Right ventricle myocardium superior (tissue), 1 donor: ENCODE measurements at regions of chr11 and their contacts with region 1.

Region 1: DNA sequence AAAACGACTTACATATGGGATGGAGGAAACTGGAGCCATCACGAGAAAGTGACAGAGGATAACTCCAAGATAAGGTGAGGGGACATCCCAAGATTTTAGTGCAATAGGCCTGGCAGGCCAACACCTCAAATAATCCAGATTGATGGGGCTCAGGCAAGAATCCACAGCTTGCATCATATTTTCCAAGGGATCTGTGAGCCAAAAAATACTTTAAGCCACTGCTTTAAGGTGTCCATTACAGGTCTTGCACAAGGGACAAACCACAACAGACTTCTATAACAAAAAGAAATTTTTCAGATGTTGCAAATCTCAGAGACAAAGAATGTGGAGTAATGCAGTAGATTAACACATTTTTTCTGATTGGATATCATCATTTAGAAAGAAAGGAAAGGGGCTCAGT is 45.6 kb downstream of the DENND5A start:
- DNase-seq: no peak
- ATAC-seq: peak; percentile 60

Region 2: DNA sequence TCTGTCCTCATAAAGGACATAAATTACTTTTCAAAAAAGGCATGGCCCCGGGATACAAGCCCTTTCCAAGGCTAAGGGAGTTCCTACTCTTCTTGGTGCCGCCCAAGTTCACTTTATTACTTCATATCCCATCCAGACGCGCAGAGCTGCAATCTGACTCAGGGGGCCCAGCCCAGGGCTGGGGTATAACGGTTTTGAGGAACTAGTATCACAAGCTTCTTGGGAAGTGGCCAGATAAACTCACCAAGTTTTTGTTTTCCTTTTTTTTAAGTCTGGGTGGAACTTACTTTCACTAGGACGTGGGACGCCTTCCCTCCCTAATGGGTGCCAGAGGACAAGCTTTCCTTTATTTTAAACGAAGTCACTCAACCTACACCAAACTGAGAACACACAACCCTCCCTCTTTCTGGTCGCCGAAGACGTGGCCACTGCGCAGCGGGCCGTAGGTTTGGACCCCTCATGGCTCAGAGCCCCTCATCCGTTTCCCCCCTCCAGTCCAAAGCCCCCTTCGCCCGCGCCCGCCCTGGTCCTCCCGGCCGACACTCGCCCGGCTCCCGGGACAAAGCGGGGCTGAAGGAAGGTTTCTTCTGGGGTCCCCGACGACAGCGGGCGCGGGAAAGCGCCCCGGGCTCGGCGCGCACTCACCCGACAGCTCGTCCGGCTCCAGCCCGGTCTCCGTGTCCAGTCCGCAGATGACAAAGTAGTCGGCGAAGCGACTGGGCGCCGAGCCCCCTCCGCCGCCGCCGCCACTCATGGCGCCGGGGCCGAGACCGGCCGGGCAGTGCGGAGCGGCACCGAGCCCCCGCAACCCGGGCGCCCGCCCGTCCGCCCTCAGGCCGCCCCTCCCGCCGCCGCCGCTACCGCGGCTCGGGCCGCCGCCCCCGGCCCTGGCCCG is 45.0 kb after region 1 on chr11:
- intact Hi-C with region 1: loop called (anchors 5 kb)
- DNase-seq: peak; percentile 80
- ATAC-seq: peak; percentile 75

Region 3: DNA sequence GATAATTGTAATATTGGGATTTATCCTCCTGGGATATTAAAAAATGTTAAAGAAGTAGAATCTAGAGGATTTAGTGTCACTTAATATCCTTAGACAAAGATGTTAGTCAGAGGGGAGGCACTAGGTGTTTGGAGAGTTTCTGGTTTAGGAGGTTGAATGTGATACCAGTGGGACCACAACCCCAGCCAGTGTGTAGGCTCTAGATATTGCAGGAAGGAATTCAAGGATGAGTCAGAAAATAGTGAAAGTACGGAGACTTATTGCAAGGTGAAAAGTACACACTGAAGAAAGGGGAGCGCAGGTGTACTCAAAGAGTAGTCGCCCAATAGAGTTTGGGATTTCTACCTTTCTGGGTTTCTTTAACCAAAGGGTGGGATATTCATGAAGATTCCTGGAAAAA is 100.5 kb after region 1 on chr11:
- intact Hi-C with region 1: no loop called
- DNase-seq: no peak
- ATAC-seq: no peak